ENCODE measurements at regions of chr6 and their contacts with region 1.

Region 1: DNA sequence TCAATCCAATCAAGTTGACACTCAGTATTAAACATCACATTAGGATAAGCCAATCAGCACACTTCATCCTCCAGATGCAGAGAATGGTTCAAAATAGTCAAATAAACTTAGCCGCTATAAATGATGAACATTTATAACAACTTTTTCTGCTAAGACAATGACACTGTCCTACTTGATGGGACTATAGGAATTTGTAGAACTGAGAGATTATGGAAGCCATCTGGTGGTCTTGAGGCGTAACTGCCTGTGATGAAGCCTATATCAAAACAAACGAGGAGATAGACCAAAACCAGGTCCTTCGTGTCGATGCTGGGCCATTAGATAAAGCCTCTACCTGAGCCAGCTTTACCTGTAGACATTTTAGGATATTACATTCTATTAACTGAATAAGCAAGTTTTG is 631.1 kb downstream of the COL12A1 start:
- DNase-seq: no peak
- ATAC-seq: peak in 3 of 8 donors; percentile 37 to 58 (median 45)
- H3K4me3 ChIP-seq: no peak overlapping the region
- H3K27ac ChIP-seq: no peak overlapping the region
- H3K4me1 ChIP-seq: no peaks in the 10 kb centered on the region
- H3K27me3 ChIP-seq: no peaks in the 10 kb centered on the region
- CTCF ChIP-seq: peak; percentile 19 to 69 (median 56)

Region 2: GRCh38 chr6:73739096-73739495 is 835.7 kb before region 1 on chr6:
- intact Hi-C with region 1: loop called in 2 of 10 experiments (anchors 5 to 10 kb)
- DNase-seq: no peak
- ATAC-seq: peak in 7 of 8 donors; percentile 58 to 86 (median 73)
- H3K4me3 ChIP-seq: no peak overlapping the region
- H3K27ac ChIP-seq: no peak overlapping the region
- H3K4me1 ChIP-seq: peaks cover 0 to 16% (median 3%) of the 10 kb centered on the region in 9 donors
- H3K27me3 ChIP-seq: no peaks in the 10 kb centered on the region
- CTCF ChIP-seq: peak; percentile 68 to 86 (median 78)

Region 3: GRCh38 chr6:73747289-73747688 is 827.5 kb before region 1 on chr6:
- intact Hi-C with region 1: loop called in 1 of 10 experiments (anchors 10 kb)
- DNase-seq: no peak
- ATAC-seq: no peak
- H3K4me3 ChIP-seq: peak overlapping the region in 1 of 10 donors; percentile 6
- H3K27ac ChIP-seq: peak overlapping the region in 1 of 10 donors; percentile 65
- H3K4me1 ChIP-seq: peaks cover 0 to 11% (median 0%) of the 10 kb centered on the region in 9 donors
- H3K27me3 ChIP-seq: no peaks in the 10 kb centered on the region
- CTCF ChIP-seq: no peak

Region 4: DNA sequence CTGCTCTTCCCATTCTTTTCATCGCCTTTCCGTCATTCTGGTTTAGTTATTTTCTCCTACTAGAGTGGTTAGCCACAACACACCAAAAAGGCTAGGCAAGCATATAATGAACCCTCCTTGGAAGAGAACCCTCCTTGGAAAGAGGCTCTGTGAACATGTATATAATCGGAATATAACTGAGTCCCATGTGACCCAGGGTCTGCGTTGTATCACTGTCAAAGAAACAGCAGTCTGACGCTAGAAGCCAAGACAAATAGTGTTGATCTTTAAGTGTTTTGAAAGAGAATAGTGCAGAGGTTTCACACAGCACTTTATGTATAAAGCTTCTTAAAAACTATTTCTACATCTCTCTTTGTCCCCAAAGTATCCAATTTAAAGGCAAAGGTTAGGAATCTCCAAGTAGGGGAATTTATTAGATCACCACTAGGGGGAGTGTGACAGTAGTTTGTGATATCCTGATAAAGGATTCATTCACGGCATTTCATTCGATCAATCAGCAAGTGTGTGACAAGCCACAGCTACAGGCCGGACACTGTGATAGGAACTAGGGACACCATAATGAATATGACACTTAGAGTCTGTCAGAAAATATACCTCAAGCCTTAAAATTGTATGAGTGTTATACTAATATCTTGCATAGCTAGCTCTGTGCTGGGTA is 483.5 kb before region 1 on chr6:
- intact Hi-C with region 1: loop called in 1 of 10 experiments (anchors 5 kb)
- DNase-seq: no peak
- ATAC-seq: peak in 5 of 8 donors; percentile 21 to 77 (median 49)
- H3K4me3 ChIP-seq: no peak overlapping the region
- H3K27ac ChIP-seq: peak overlapping the region in 1 of 10 donors; percentile 37
- H3K4me1 ChIP-seq: peaks cover 0 to 6% (median 0%) of the 10 kb centered on the region in 9 donors
- H3K27me3 ChIP-seq: no peaks in the 10 kb centered on the region
- CTCF ChIP-seq: peak; percentile 42 to 81 (median 70)

Measured in heart right ventricle (tissue), 16 donors.